Endothelial cell of umbilical vein (primary cell): ENCODE measurements at regions of chr18 and their contacts with region 1.

Region 1: GRCh38 chr18:70781860-70782453 is 493.1 kb downstream of the SOCS6 start:
- DNase-seq: peak; percentile 72
- H3K4me3 ChIP-seq: no peak overlapping the region
- H3K27ac ChIP-seq: no peak overlapping the region
- H3K4me1 ChIP-seq: no peaks in the 10 kb centered on the region
- H3K27me3 ChIP-seq: no peaks in the 10 kb centered on the region
- CTCF ChIP-seq: peak; percentile 72
- POLR2A ChIP-seq: no peak

Region 2: DNA sequence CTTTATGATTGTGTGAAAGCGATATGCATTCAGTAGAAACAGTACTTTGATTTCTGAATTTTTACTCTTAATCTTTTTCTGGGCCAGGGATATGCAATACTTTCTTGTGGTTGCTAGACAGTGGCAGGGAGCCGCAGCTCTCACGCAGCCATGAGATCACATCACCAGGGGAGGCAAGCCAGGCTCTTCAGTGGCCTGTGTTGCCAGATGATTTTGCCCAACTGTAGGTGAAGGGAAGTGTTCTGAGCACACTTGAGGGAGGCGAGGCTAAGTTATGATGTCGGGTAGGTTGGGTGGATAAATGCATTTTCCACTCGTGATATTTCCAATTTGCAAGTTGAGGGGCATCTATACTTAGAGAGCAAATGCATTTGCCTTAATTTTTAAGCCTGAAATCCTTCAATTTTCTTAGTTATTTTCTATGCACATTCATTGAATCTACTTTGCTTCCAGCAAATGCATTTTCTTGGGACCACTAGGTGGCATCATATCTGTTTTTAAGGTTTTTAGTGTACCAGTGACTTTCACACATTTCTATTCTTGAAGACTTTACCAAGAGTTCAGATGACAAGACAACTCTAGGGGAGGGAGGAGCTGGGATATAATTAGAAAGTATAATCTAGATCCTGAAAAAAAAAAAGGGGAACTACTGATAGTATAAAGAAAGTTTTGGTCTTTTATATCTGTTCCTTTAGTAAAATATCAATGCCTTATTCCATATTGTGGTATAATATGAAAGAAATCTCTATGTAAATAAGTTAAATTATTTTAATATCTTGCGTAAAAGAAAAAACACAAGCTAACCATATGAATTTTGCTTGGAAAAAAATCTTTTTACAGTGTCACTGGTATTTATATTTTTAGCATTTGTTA is 150.2 kb after region 1 on chr18:
- CTCF ChIA-PET with region 1: interaction called, 9 read pairs
- POLR2A ChIA-PET with region 1: no interaction called
- dilution Hi-C with region 1: no loop called
- intact Hi-C with region 1: loop called (anchors 1 kb)
- DNase-seq: peak; percentile 63
- H3K4me3 ChIP-seq: no peak overlapping the region
- H3K27ac ChIP-seq: no peak overlapping the region
- H3K4me1 ChIP-seq: no peaks in the 10 kb centered on the region
- H3K27me3 ChIP-seq: no peaks in the 10 kb centered on the region
- CTCF ChIP-seq: peak; percentile 45 to 49
- POLR2A ChIP-seq: no peak

Region 3: DNA sequence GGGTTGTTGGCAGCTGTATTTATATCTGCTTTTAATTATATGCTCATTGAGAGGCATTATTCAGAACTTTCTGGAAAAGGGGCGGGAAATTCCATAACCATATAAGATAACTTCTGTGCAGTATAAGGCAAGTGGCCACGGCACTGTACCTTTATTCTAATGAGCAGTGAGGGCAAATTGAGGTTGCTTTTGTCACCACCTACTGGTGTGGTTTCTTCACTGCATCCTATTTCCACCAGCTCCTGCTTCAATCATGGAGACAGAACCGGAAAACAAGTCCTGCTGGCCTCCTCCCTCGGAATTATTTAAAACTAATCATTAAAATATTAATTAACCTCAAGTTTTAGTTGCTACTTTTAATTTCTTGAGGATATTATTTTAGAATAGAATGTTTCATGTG is 1002.8 kb after region 1 on chr18:
- CTCF ChIA-PET with region 1: interaction called, 39 read pairs
- POLR2A ChIA-PET with region 1: no interaction called
- dilution Hi-C with region 1: no loop called
- intact Hi-C with region 1: loop called (anchors 1 kb)
- DNase-seq: peak; percentile 51
- H3K4me3 ChIP-seq: no peak overlapping the region
- H3K27ac ChIP-seq: no peak overlapping the region
- H3K4me1 ChIP-seq: no peaks in the 10 kb centered on the region
- H3K27me3 ChIP-seq: no peaks in the 10 kb centered on the region
- CTCF ChIP-seq: peak; percentile 41 to 62
- POLR2A ChIP-seq: no peak

Region 4: DNA sequence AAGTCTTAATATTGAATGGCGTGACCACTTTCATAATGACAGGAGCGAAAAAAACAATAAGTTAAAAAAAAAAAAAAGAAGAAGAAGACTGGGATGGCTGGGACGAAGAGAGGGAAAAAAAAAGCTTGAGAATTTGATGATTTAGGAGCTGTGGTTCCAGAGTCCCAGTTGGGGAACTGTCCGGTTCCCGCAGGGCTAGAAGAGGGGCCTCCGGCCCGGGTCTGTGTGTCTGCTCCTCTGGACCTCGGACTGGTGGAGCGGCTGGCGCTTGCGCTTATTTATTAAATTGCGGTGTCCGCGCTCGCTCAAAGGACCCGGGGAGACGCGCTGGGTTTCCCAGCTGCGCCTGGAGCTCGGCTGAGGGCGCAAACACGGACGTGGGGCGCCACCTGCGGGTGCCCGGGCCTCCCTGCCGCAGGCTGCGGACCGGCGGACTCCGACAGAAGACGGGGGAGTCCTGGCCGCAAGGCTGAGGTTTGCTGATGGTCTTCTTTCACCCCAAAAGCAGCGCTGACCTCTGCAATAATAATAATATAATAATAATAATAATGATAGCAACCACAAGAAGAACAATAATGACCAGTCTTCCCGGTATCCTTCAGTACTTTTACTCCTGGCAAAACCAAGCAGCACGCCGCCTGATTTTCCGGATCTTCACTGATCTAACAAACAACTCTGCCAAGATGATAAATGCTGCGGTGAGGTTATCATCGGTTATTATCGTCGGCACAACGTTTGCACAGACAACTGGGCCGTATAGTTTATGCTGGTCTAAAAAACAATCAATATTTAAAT is 1762.3 kb after region 1 on chr18 and contains the start of gene CBLN2:
- CTCF ChIA-PET with region 1: interaction called, 94 read pairs
- POLR2A ChIA-PET with region 1: no interaction called
- dilution Hi-C with region 1: no loop called
- intact Hi-C with region 1: loop called (anchors 1 kb)
- DNase-seq: peak; percentile 64
- H3K4me3 ChIP-seq: peak within 1 kb of the TSS; percentile 24 to 58 (median 46)
- H3K27ac ChIP-seq: no peak within 1 kb of the TSS
- H3K4me1 ChIP-seq: peaks cover 16% of the 10 kb centered on the region
- H3K27me3 ChIP-seq: peaks cover 24 to 51% of the 10 kb centered on the region in 2 experiments
- CTCF ChIP-seq: peak; percentile 74 to 95
- POLR2A ChIP-seq: no peak
- total RNA-seq, gene CBLN2: 0.55 and 1.1 TPM in 2 replicates